ENCODE measurements at regions of chr11 and their contacts with region 1.

Region 1: GRCh38 chr11:124865921-124866583 is 820 bp downstream of the ROBO3 start:
- DNase-seq: peak; percentile 60
- H3K4me3 ChIP-seq: peak overlapping the region; percentile 30
- H3K27ac ChIP-seq: no peak overlapping the region
- H3K4me1 ChIP-seq: peaks cover 8% of the 10 kb centered on the region
- H3K27me3 ChIP-seq: peaks cover 92% of the 10 kb centered on the region
- CTCF ChIP-seq: peak; percentile 92

Region 2: DNA sequence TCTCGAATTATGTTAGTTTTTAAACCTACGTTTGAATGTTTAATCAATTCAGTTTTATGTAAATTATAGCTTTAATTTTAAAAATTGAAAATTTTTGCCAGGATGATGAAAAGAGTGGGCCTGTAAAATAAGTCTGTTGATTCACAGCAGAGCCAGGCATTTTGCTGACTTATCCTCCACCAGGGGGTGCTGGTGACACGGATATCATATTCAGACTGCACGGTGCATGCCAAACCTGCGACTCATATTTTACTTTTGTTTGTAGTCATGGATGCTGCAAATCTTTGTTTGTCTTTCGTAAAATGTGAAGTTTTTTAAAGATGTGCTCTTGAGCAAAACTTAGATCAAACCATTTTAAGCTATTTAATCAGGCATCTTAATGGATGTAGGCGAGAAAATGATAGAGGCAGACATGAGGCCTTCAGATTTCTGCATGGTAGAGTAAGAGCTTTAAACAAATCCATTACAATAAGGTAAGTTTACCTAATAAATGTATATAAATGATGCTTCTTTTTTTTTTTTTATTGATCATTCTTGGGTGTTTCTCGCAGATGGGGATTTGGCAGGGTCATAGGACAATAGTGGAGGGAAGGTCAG is 463.6 kb before region 1 on chr11:
- CTCF ChIA-PET with region 1: no interaction called
- POLR2A ChIA-PET with region 1: no interaction called
- intact Hi-C with region 1: loop called (anchors 10 kb)
- DNase-seq: peak; percentile 89
- H3K4me3 ChIP-seq: no peak overlapping the region
- H3K27ac ChIP-seq: no peak overlapping the region
- H3K4me1 ChIP-seq: peaks cover 21% of the 10 kb centered on the region
- H3K27me3 ChIP-seq: no peaks in the 10 kb centered on the region
- CTCF ChIP-seq: peak; percentile 97

Region 3: GRCh38 chr11:124644426-124645280 is 221.4 kb before region 1 on chr11:
- CTCF ChIA-PET with region 1: no interaction called
- POLR2A ChIA-PET with region 1: no interaction called
- intact Hi-C with region 1: loop called (anchors 1 kb)
- DNase-seq: peak; percentile 88
- H3K4me3 ChIP-seq: no peak overlapping the region
- H3K27ac ChIP-seq: no peak overlapping the region
- H3K4me1 ChIP-seq: peaks cover 6% of the 10 kb centered on the region
- H3K27me3 ChIP-seq: no peaks in the 10 kb centered on the region
- CTCF ChIP-seq: peak; percentile 98

Measured in A673 (cell line).